ENCODE measurements at regions of chr4 and their contacts with region 1.

Region 1: GRCh38 chr4:146095091-146095690 is 80.3 kb upstream of the LSM6 start:
- DNase-seq: no peak
- H3K4me3 ChIP-seq: no peak overlapping the region
- CTCF ChIP-seq: peak; percentile 54

Region 2: DNA sequence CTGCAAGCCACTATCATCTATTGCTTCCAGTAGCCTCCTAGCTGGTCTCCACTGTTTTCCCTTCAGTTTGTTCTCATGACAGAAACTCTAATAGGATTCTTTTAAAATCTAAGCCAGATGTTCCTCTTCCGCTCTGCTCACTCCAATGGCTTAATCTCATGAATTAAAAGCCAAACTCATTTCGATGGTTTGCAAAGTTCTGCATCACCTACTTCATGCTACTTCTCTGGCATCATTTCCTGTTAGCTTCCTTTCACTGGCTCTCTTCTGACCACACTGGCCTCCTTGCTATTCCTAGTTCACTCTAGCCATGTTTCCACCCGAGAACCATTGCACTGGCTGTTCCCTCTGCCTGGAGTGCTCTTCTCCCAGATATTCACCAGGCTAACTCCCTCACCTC is 21.7 kb before region 1 on chr4:
- CTCF ChIA-PET with region 1: interaction called, 34 read pairs
- POLR2A ChIA-PET with region 1: no interaction called
- DNase-seq: no peak
- H3K4me3 ChIP-seq: no peak overlapping the region
- CTCF ChIP-seq: no peak

Region 3: GRCh38 chr4:146105464-146105863 is 10.3 kb after region 1 on chr4:
- CTCF ChIA-PET with region 1: interaction called, 12 read pairs
- POLR2A ChIA-PET with region 1: no interaction called
- DNase-seq: no peak
- H3K4me3 ChIP-seq: no peak overlapping the region
- CTCF ChIP-seq: no peak

Region 4: GRCh38 chr4:146428298-146428697 is 333.1 kb after region 1 on chr4:
- CTCF ChIA-PET with region 1: no interaction called
- POLR2A ChIA-PET with region 1: no interaction called
- DNase-seq: no peak
- H3K4me3 ChIP-seq: no peak overlapping the region
- CTCF ChIP-seq: no peak